CD4-positive, alpha-beta T cell (primary cell): ENCODE measurements at regions of chr11 and their contacts with region 1.

Region 1: DNA sequence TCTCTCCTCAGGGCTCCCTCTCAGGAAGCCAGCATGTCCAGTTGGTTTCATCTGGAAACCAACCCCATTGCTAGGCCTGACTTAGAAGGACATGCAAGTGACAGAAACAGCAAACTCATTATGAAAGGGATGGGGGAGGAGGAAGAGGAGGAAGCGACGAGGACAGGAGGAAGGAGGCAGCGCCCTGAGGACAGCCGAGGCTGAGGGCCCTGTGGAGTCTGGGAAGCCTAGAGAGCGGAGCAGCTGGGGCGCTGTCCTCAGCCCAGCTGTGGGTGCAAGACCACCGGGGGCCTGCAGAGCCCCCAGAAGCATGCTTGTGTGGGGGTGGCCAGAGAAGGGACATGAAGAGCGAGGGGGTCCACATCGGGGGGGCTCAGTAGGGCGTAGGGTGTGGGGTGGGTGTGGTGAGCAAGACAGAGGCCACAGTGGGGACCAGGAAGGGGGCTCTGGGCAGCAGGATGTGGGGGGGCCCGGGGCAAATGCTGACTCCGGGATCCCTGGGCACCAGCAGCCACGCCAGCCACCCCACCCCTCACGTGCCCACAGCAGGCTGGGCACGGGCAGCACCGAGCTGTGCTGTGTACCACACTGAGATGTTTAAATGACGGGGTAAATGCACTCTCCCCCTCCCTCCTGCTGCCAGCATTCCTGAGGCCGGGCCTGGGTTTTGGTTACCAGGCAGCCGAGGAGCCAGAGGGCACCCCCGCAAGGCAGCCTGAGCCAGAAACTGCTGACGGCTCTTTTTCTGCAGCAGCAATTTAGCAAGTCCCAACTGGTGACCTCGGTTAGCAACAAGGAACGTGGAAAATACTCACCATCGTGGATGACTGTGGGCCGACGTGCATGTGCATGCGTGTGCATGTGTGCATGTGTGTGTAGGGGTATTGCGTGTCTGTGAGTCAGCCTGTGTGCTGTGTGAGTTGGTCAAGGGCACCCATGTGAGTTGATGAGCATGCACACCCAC is 82.7 kb upstream of the LINC01488 start:
- DNase-seq: no peak
- ATAC-seq: no peak
- H3K4me3 ChIP-seq: no peak overlapping the region
- H3K4me3 Mint-ChIP-seq: no peak overlapping the region
- H3K27ac ChIP-seq: no peak overlapping the region
- H3K27ac Mint-ChIP-seq: no peak overlapping the region
- H3K4me1 ChIP-seq: peaks cover 3% of the 10 kb centered on the region
- H3K4me1 Mint-ChIP-seq: peaks cover 12% of the 10 kb centered on the region
- H3K27me3 ChIP-seq: no peaks in the 10 kb centered on the region
- H3K27me3 Mint-ChIP-seq: no peaks in the 10 kb centered on the region
- CTCF ChIP-seq: no peak

Region 2: GRCh38 chr11:69430566-69430965 is 31.8 kb after region 1 on chr11:
- CTCF ChIA-PET with region 1: no interaction called
- POLR2A ChIA-PET with region 1: no interaction called
- intact Hi-C with region 1: loop called in 1 of 2 experiments (anchors 5 kb)
- DNase-seq: no peak
- ATAC-seq: no peak
- H3K4me3 ChIP-seq: no peak overlapping the region
- H3K4me3 Mint-ChIP-seq: no peak overlapping the region
- H3K27ac ChIP-seq: no peak overlapping the region
- H3K27ac Mint-ChIP-seq: no peak overlapping the region
- H3K4me1 ChIP-seq: peaks cover 7% of the 10 kb centered on the region
- H3K4me1 Mint-ChIP-seq: peaks cover 9% of the 10 kb centered on the region
- H3K27me3 ChIP-seq: no peaks in the 10 kb centered on the region
- H3K27me3 Mint-ChIP-seq: peaks cover 26% of the 10 kb centered on the region
- CTCF ChIP-seq: no peak

Region 3: DNA sequence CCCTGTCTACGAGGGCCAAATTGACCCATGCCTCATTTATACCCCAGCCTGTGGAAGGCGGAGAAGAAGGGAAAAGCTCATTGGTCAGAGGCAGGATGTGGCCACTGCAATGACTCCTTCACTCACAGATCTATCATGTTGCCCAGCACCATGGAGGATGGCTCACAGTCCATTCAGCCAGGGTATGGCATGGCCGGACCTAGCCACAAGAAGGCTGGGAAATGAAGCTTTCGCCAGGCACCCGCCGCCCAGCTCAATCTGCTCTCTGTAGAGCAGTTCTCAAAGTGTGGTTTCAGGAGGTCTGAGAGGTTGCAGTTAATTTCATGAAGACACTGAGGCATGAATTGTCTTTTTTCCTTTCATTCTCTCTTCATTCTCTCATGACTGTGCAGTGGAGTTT is 42.1 kb after region 1 on chr11:
- CTCF ChIA-PET with region 1: no interaction called
- POLR2A ChIA-PET with region 1: no interaction called
- intact Hi-C with region 1: no loop called
- DNase-seq: no peak
- ATAC-seq: no peak
- H3K4me3 ChIP-seq: no peak overlapping the region
- H3K4me3 Mint-ChIP-seq: no peak overlapping the region
- H3K27ac ChIP-seq: no peak overlapping the region
- H3K27ac Mint-ChIP-seq: no peak overlapping the region
- H3K4me1 ChIP-seq: peaks cover 19% of the 10 kb centered on the region
- H3K4me1 Mint-ChIP-seq: peaks cover 12% of the 10 kb centered on the region
- H3K27me3 ChIP-seq: peaks cover 0 to 9% of the 10 kb centered on the region in 2 experiments
- H3K27me3 Mint-ChIP-seq: peaks cover 6% of the 10 kb centered on the region
- CTCF ChIP-seq: no peak

Region 4: DNA sequence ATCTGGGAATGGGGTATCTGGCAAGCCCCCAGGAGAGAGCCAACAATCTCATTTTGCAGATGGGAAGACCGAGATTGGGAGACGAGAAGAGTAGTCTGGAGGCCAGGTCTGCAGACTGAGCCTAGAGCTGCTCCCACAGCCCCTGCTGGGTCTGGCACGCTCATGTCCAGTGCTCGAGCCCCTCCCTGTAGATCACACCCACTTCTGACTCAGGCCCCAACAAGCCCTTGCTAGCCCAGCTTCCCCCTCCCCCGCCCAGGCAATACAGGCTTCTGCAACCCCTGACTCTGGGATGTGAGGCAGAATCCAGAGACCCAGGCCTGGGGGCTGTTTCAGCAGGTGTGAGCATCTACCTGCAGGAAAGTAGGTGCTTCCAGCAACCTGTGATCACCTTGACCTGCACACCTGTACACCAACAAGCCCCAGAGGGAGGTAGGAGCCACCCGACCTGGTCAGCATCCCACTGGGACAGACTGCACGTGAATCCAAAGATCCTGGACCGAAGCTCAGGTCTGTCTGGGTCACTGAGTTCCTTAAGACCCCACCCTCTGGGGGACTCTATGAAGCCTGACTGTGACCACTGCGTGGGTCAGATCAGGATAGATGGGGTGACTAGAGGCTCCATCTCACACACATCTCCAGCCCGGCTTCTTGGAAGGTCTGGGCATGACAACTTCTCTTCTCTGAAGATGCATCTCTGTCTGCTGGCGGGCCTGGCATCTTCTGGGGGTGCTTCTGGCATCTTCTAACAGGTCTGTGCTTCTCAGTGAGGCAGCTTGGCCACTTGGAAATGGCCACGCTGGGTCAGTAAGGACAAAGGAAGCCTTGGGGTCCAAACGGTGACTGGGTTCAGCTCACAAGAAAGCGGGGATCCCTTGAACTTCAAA is 111.9 kb after region 1 on chr11:
- CTCF ChIA-PET with region 1: no interaction called
- POLR2A ChIA-PET with region 1: no interaction called
- intact Hi-C with region 1: no loop called
- DNase-seq: no peak
- ATAC-seq: no peak
- H3K4me3 ChIP-seq: no peak overlapping the region
- H3K4me3 Mint-ChIP-seq: no peak overlapping the region
- H3K27ac ChIP-seq: no peak overlapping the region
- H3K27ac Mint-ChIP-seq: no peak overlapping the region
- H3K4me1 ChIP-seq: no peaks in the 10 kb centered on the region
- H3K4me1 Mint-ChIP-seq: peaks cover 5% of the 10 kb centered on the region
- H3K27me3 ChIP-seq: no peaks in the 10 kb centered on the region
- H3K27me3 Mint-ChIP-seq: no peaks in the 10 kb centered on the region
- CTCF ChIP-seq: no peak